ENCODE measurements at regions of chr11 and their contacts with region 1.

Region 1: DNA sequence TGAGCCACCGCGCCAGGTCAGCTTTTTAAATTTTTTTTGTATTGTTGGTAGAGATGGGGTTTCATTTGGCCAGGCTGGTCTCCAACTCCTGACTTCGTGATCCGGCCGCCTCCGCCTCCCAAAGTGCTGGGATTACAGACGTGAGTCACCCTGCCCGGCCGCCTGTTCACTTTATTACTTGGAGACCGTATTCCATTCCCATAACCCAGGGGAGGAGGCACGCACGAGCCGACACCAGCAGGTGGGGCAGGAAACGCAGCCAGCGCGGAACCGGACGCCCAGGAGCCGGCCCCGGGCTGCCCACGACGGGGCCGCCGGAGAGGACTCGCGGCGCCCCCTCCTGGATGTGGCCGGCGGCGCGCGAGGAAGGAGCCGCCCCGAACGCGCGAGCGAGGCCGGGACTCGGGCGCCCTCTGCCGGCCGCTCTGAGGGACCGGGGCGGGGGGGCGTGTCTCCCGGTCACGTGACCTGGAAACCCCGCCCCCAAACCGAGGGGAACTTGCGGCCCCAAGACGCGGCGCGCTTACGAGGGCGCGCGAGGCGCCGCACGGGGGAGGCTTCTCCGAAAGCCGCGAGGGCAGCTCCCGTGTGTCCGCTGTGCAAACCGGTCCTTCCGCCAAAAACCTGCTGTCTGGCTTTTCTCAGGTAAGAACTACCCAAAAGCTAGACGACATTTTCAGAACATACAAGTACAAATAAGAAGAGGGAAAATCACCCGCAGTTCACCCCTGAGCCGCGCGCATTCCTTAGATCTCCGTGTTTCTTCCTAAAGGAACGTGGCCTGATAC is 11.6 kb upstream of the RNH1 start:
- DNase-seq: peak; percentile 68
- H3K4me3 ChIP-seq: peak overlapping the region in 3 of 4 donors; percentile 25 to 57 (median 36)
- H3K27ac ChIP-seq: peak overlapping the region; percentile 86 to 94 (median 90)
- H3K4me1 ChIP-seq: peaks cover 8 to 53% (median 14%) of the 10 kb centered on the region in 3 donors
- H3K27me3 ChIP-seq: no peaks in the 10 kb centered on the region
- CTCF ChIP-seq: peak; percentile 97 to 100 (median 100)
- POLR2A ChIP-seq: peak in 1 of 4 donors; percentile 29

Region 2: DNA sequence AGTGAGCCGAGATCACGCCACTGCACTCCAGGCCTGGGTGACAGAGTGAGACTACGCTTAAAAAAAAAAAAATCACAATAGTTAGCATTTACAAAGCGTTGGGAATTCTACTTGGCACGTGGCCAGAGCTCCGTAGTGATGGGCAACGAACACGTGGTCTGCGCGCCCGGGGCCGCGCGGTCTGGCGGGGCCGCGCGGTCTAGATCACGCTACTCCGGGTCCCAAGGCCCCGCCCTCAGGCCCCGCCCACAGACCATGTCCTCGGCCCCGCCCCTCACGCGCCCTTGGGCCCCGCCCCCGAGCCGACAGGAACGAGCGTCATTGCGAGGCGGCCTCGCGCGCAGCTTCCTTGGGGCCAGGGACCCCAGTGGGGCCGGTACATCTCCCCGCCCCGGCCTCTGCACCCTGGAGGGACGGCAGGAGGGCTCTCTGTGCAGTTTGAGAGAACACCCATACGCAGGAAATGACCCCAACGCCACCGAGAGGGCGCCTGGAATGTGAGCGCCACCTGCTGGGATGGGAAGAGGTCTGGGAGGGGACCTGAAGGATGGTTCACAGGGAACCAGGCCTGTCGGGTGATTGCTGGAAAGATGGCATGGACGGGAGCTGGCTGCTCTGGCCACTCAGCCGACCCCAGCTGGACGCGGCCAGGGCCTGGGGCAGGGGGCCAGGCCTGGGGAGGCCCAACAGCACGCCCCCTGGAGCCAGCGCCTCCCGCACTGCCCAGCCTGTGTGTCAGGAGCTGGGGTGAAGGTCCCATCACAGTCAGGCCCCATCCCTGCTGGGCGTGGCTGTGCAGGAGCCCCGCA is 70.5 kb before region 1 on chr11:
- intact Hi-C with region 1: loop called (anchors 5 kb)
- DNase-seq: peak; percentile 77
- H3K4me3 ChIP-seq: peak overlapping the region; percentile 41 to 87 (median 60)
- H3K27ac ChIP-seq: peak overlapping the region; percentile 90 to 99 (median 95)
- H3K4me1 ChIP-seq: peaks cover 21 to 84% (median 34%) of the 10 kb centered on the region in 3 donors
- H3K27me3 ChIP-seq: no peaks in the 10 kb centered on the region
- CTCF ChIP-seq: peak; percentile 84 to 93 (median 86)
- POLR2A ChIP-seq: peak in 2 of 4 donors; percentile 59 to 86

Region 3: DNA sequence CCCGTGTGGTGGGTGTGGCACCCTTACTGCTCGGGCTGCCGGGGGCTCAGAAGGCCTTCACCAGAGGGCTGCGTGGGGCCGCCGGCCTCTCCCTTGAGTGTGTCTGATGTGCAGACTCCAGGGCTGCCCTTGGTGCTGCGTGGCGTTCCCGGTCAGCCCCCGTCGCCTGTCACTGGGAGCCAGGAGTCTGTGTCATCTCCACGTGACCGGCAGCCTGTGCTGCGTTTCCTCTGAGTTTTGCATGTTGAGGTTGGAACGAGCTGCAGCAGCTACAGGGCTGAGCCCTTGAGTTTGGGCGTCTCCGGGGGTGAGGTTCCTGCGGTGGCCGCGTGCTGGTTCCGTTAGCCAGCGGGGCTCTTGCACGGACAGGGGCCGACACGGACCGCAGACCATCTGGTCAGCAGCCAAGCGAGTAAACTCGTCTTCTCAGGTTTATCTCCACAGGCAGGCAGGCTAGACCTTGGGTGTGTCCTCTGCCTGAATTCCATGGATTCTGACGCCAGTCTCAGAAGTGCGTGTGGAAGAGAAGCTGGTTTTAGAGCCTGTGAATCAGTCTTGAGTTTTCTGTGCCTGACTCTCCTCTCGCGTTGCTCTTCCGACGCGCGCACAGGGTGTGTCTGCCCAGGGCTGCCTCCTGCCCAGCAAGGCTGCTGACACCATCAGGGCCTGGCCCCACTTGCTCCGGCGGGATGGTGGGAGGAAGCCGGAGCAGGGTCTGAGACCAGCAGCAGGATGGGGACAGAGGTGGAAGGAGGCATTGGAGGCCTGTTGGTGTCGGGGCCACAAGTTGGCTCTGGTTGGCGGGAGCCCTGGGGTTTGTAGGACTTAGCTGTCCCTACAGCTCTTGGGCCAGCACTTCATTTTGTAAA is 58.1 kb before region 1 on chr11:
- intact Hi-C with region 1: loop called (anchors 5 kb)
- DNase-seq: no peak
- H3K4me3 ChIP-seq: no peak overlapping the region
- H3K27ac ChIP-seq: peak overlapping the region in 1 of 4 donors; percentile 55
- H3K4me1 ChIP-seq: peaks cover 0 to 6% (median 0%) of the 10 kb centered on the region in 3 donors
- H3K27me3 ChIP-seq: no peaks in the 10 kb centered on the region
- CTCF ChIP-seq: no peak
- POLR2A ChIP-seq: no peak